AG04450 (cell line): ENCODE measurements at regions of chr12 and their contacts with region 1.

Region 1: GRCh38 chr12:110224379-110225304 is 56.4 kb upstream of the ATP2A2 start:
- DNase-seq: peak; percentile 62
- H3K4me3 ChIP-seq: peak overlapping the region; percentile 23
- H3K27ac ChIP-seq: peak overlapping the region; percentile 43
- H3K27me3 ChIP-seq: no peaks in the 10 kb centered on the region
- CTCF ChIP-seq: peak; percentile 77

Region 2: GRCh38 chr12:110234755-110235154 is 10.1 kb after region 1 on chr12:
- CTCF ChIA-PET with region 1: interaction called, 15 read pairs
- POLR2A ChIA-PET with region 1: no interaction called
- DNase-seq: no peak
- H3K4me3 ChIP-seq: no peak overlapping the region
- H3K27ac ChIP-seq: no peak overlapping the region
- H3K27me3 ChIP-seq: no peaks in the 10 kb centered on the region
- CTCF ChIP-seq: no peak